ENCODE measurements at regions of chr3 and their contacts with region 1.

Region 1: GRCh38 chr3:40191850-40192448 is 117.6 kb upstream of the EIF1B start:
- DNase-seq: peak; percentile 77
- ATAC-seq: peak; percentile 55

Region 2: GRCh38 chr3:39707314-39707909 is 484.5 kb before region 1 on chr3:
- intact Hi-C with region 1: loop called (anchors 10 kb)
- DNase-seq: no peak
- ATAC-seq: no peak

Region 3: DNA sequence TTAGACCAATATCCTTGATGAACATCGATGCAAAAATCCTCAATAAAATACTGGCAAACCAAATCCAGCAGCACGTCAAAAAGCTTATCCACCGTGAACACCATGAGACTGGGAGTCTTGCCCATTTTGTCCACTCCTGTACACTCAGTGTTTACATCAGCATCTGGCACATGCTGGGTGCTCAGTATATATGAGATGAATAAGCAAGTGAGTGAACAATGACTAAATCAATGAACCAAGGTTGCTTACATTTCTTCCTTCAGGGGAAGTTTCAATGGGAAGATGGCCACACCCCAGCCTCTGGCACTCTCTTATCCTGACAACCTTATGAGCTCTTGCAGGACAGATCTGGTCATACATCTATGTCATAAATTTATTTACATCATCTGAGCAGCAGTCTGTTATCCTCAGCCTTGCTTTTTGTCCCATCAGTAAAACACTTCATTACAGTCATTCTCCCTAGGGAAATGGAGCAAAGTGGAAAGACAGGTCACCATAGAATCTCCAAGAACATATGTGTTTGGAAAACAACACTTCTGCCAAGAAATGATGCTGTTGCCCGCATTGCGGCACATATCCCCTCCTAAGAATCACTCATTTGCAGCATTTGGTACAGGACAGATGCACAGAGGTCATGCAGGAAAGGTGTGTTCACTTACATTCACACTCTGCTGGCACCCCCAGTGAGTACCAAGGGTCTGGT is 54.2 kb before region 1 on chr3:
- intact Hi-C with region 1: no loop called
- DNase-seq: no peak
- ATAC-seq: no peak

Region 4: GRCh38 chr3:40237889-40238571 is 46.1 kb after region 1 on chr3:
- intact Hi-C with region 1: no loop called
- DNase-seq: no peak
- ATAC-seq: no peak

Region 5: DNA sequence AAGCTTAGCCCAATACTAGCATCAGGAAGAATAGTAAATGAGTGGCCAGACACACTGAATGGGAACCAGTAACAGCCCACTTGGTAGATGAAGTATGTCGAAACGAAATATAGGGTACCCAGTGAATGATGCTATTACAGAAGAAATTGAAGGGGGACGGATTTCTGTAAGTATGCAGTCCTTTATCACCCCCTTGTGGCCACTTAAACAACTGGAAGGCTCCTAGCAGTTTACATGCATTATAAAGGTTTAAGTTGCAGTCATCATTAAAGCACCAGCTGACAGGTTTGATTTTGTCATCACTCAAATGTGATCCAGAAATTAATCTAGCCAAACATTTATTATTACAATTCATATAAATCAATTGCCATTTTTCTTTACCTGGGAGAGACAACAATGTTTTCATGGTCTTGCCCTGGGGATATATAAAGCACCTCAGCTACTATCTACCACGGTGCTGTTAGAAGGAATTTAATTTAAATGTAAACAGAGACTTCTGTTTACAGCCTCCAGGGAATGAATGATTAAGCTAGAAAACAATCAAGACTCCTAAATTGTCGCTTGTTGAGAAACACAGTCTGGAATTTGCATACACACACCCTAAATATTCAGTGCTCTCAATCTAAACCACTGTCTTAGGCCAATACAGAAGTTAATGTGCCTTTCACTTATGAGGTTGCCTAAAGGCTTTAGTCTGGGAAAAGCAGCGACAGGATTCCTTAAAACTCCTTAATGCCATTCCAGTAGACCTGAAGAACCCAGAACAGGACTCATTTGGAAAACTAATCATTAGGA is 125.3 kb after region 1 on chr3:
- intact Hi-C with region 1: loop called (anchors 5 kb)
- DNase-seq: no peak
- ATAC-seq: peak; percentile 64

Measured in sciatic nerve (tissue), 2 donors.